ENCODE measurements at regions of chr9 and their contacts with region 1.

Region 1: DNA sequence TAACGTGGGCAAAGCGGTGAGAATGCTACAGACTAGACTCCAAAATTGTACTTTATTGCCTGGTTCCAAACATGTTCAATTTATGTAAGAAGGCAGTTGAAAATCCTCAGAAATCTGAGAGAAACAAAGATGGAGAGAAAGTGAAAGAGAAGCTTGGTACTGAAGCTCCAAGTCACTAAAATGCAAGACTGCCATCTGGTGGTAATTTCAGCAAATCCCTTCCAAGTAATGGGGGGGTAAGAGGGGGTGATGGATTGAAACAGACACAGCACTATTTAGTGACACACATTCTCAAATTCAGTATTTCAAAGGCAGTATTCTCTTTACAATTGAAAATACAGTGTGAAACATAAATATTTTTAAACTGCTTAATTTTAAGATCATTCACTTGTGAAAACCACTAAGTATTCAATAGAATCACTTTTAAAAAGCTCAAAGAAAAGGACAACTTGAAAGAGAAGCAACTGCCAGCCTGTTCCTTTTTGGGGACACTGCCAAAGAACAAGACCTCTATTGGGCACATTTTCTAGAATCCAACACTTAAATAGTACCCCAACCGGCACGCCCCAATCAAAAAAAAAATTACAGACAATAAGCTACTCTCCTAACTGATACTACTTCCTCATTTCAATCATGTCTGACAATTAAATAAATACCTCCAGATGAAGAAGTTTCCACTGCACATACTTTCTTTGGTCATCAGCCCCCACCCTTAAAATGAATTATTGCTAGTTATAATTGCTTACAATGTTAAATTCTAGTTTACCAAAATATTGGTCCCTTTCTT is 131.5 kb downstream of the AGTPBP1 start:
- DNase-seq: peak; percentile 45
- ATAC-seq: peak; percentile 87
- H3K4me3 Mint-ChIP-seq: peak overlapping the region; percentile 44
- H3K27ac Mint-ChIP-seq: peak overlapping the region; percentile 72
- H3K4me1 Mint-ChIP-seq: peaks cover 11% of the 10 kb centered on the region
- H3K27me3 Mint-ChIP-seq: no peaks in the 10 kb centered on the region
- CTCF ChIP-seq: peak; percentile 74

Region 2: DNA sequence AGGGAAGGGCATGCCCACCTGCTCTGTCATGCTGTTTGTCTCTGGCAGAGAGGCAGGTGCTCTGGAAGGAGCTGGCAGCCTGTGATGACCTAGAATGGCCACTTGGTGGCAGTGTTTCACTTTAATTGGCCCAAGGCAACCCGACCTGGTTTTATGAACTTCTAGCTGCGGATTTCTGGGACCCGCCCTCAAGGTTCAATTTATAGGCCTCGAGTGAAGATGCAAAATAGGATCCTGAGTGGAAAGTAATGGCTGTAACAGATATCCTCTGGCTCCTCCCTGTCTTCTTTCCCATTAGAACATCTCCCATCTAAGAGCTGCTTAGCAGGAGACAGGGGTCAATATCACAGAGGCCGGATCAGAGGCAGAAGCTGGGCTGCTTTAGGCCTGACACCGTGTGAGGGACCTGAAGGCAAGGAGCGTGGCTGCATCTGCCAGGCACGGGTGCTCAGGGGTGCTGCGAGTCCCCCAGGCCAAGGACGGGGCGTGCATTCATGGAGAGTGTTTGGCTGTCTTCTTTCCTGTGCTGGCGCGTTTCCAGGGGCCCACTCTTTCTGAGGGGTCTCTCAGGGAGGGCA is 1213.0 kb before region 1 on chr9:
- CTCF ChIA-PET with region 1: interaction called, 11 read pairs
- POLR2A ChIA-PET with region 1: no interaction called
- intact Hi-C with region 1: no loop called
- DNase-seq: peak; percentile 68
- ATAC-seq: peak; percentile 74
- H3K4me3 Mint-ChIP-seq: no peak overlapping the region
- H3K27ac Mint-ChIP-seq: no peak overlapping the region
- H3K4me1 Mint-ChIP-seq: no peaks in the 10 kb centered on the region
- H3K27me3 Mint-ChIP-seq: peaks cover 2% of the 10 kb centered on the region
- CTCF ChIP-seq: peak; percentile 82